Activated T-helper 2 cell treated with anti-CD3 and anti-CD28 coated beads, Interferon-gamma antibody, Interleukin-2, Interleukin-4, amounts not matched to agents 10 μg/mL and 5 μg/mL and 100 μg/mL, durations not matched to agents 14 hours and 24 hours and 36 hours (primary cell): ENCODE measurements at regions of chr7 and their contacts with region 1.

Region 1: DNA sequence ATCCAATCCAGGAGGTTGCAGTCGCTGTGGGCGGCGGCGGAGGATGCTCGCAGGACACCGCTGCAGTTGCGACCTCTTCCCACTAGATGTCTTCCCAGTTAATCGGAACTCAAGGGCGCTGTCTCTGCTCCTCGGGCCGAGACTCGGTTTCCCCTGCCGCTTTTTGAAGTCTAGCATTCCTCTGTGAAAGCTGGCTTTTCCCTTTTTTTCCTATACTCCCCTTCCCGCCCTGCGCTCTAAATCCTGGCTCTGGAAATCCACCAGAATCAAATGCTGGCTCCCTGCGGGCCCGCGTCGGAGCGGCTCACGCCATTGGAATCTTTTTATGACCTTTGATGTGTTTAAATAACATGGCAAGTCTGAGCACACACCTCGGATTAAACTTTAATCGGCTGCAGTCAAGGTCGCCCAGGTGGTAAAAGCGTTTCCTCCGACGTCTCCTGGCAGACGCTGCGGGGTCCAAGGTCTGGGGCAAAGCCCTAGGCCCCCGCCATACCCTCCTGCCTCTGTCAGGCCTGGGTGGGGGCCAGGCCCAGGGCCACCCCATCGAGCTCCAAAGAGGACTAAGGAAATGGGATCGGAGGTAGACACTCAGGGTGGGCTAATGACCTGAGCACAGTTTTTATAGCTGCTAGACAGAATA is 10.7 kb upstream of the HOXA13 start:
- DNase-seq: no peak
- H3K4me3 Mint-ChIP-seq: peak overlapping the region; percentile 10
- H3K27ac Mint-ChIP-seq: no peak overlapping the region
- H3K4me1 Mint-ChIP-seq: no peaks in the 10 kb centered on the region
- H3K27me3 Mint-ChIP-seq: peaks cover 83% of the 10 kb centered on the region

Region 2: GRCh38 chr7:26993816-26994810 is 216.4 kb before region 1 on chr7:
- intact Hi-C with region 1: no loop called
- DNase-seq: no peak
- H3K4me3 Mint-ChIP-seq: no peak overlapping the region
- H3K27ac Mint-ChIP-seq: no peak overlapping the region
- H3K4me1 Mint-ChIP-seq: no peaks in the 10 kb centered on the region
- H3K27me3 Mint-ChIP-seq: peaks cover 2% of the 10 kb centered on the region

Region 3: DNA sequence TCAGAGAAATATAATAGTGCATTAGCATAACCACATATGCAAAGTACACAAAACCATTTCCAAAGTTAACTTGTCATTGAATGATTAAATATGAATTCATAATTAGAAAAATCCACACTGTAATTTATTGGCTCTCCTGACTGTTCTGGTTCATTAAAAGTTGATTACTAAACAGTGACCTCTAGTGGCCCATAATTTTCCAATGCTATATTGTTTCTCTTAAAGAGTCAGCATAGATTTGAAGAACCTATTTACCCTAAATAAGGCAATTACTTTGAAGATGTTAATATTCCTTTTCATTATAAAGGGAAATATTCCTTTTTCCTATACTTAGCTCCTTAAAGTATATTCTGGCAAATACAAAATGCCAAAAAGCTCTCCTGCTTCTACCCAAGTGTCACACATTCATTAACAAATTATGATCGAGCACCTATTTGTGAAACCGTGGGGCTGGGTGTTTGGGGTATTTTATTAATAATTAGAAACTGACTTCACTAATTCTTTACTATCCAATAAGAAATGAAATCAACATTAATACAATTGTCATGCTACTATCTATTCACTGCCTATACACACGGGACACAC is 365.9 kb after region 1 on chr7:
- intact Hi-C with region 1: loop called (anchors 5 kb)
- DNase-seq: no peak
- H3K4me3 Mint-ChIP-seq: no peak overlapping the region
- H3K27ac Mint-ChIP-seq: no peak overlapping the region
- H3K4me1 Mint-ChIP-seq: no peaks in the 10 kb centered on the region
- H3K27me3 Mint-ChIP-seq: peaks cover 7% of the 10 kb centered on the region

Region 4: GRCh38 chr7:27921081-27921836 is 710.7 kb after region 1 on chr7:
- intact Hi-C with region 1: loop called (anchors 5 kb)
- DNase-seq: no peak
- H3K4me3 Mint-ChIP-seq: no peak overlapping the region
- H3K27ac Mint-ChIP-seq: no peak overlapping the region
- H3K4me1 Mint-ChIP-seq: no peaks in the 10 kb centered on the region
- H3K27me3 Mint-ChIP-seq: peaks cover 7% of the 10 kb centered on the region

Region 5: DNA sequence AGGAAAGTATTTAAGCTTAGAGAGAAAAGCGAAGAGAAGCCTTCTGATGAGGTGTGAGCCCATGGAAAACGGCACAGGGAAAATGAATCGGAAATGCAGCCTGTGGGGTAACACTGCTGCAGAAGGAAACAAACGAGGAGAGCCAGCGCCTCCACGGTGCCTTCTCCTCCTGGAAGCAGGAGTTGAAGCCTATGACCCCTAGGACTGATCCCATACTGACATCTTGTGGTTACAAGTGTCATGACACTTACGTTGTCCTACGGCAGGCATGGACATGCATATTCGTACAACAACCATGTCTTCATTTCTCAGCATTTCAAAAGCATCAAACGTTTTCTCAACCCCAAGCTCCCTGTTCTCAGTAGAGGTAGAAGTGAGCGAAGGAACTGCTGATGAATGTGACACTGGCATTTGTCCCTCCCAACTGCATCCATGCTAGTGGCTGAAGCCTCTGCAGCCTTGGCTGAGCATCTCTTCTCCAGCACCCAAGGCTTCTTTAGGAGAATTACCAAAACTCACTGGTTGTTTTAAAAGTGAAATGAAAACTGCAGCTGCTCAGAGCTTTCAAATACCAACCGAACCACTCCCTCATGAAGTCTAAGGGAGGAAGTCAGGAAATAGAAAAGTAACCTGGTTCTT is 809.9 kb after region 1 on chr7:
- intact Hi-C with region 1: loop called (anchors 5 kb)
- DNase-seq: no peak
- H3K4me3 Mint-ChIP-seq: no peak overlapping the region
- H3K27ac Mint-ChIP-seq: no peak overlapping the region
- H3K4me1 Mint-ChIP-seq: peaks cover 3% of the 10 kb centered on the region
- H3K27me3 Mint-ChIP-seq: peaks cover 14% of the 10 kb centered on the region